GM23248 (cell line): ENCODE measurements at regions of chr3 and their contacts with region 1.

Region 1: DNA sequence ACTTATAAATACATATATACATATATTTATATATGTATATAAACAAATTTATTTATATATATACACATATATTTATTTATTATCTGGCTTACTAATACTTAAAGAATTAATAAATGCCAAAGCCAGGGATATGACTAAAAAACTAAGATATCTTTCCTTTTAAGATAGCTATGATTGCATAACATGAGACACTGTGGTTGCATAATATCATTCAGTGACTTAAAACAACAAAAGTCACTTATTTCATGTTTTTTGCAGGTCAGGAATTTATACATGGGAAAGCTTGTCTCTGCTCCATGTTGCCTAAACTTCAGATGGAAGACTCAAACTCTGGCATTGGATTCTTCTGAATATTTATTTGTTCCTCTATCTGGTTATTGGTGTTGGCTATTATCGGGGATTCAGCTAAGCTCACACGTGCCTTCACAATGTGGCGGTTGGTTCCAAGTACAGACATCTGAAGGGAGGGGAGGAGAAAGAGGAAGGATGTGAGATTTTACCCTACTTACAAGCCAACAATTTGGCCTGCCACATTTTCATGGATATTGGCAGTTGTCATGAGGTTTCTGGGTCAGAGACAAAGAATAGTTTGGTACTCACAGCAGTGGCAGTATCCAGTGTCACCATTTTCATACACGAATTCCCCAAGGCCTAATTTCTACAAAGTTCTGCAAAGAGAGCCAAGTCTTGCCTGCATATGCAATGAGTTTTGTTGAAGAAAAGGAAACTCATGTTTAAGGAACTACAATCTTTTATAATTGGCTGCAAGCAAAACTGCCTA is 381.6 kb downstream of the EPHA3 start:
- DNase-seq: peak; percentile 0
- H3K4me3 ChIP-seq: no peak overlapping the region
- H3K27ac ChIP-seq: no peak overlapping the region
- H3K4me1 ChIP-seq: no peaks in the 10 kb centered on the region
- H3K27me3 ChIP-seq: no peaks in the 10 kb centered on the region

Region 2: DNA sequence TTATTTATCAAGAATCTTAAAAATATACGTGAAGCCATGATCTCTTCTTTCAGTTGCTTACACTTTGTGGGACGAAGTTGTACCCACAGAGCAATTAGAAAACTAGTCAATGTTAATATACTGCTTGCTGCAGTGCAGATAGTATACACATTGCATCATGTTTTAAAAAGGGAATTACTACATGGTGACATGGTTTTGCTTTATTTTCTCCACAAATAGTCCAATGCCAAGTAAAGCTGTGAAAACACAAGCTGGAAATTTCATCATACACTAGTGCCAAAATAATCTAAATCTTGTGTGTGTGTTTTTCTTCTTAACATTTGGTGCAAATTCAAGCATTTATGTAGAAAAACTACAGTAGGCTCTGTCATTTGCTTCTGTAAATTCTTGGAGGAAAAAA is 148.6 kb before region 1 on chr3:
- in situ Hi-C with region 1: no loop called
- DNase-seq: no peak
- H3K4me3 ChIP-seq: no peak overlapping the region
- H3K27ac ChIP-seq: no peak overlapping the region
- H3K4me1 ChIP-seq: no peaks in the 10 kb centered on the region
- H3K27me3 ChIP-seq: no peaks in the 10 kb centered on the region

Region 3: GRCh38 chr3:89577637-89578530 is 88.9 kb after region 1 on chr3:
- in situ Hi-C with region 1: loop called (anchors 25 kb)
- DNase-seq: no peak
- H3K4me3 ChIP-seq: no peak overlapping the region
- H3K27ac ChIP-seq: no peak overlapping the region
- H3K4me1 ChIP-seq: no peaks in the 10 kb centered on the region
- H3K27me3 ChIP-seq: no peaks in the 10 kb centered on the region